Activated B cell treated with CpG ODN at 0.5 μM for 24 hours (primary cell): ENCODE measurements at regions of chr5 and their contacts with region 1.

Region 1: DNA sequence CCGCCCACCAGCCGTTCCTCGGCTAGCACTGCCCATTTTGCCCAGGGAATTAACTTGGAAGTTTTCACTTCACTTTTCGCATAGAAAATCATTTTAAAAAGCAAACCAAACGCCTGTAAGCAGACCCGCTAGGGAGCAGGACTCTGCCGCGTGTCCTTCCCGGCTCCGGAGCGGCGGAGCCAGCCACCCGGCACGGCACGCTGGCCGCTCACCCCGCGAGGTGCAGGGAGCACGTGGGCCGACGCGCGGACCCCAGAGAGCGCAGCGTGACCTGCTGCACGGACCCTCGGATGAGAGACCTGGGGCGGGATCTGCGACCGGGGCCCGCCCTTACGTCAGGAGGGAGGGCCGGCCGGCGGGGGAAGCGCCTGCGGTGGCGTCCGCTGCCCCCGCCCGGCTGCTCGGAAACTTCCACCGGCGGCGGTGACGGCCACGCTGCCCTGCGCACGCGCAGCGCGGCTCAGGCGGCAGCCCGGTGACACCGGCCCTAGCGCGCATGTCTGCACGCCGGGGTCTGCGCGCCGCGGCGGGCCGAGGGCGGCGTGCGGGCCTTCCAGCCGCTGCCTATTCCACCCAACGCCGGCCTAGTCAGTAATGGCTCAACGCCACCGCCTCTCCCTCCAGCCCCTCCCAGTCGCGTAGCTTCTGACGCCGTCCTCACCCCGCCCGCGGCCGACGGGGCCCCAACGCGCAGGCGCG is 506 bp upstream of the TENT4A start:
- DNase-seq: peak; percentile 98
- ATAC-seq: peak; percentile 79
- H3K4me3 Mint-ChIP-seq: peak overlapping the region; percentile 89
- H3K27ac Mint-ChIP-seq: peak overlapping the region; percentile 92
- H3K4me1 Mint-ChIP-seq: peaks cover 38% of the 10 kb centered on the region
- H3K27me3 Mint-ChIP-seq: no peaks in the 10 kb centered on the region
- CTCF ChIP-seq: no peak

Region 2: DNA sequence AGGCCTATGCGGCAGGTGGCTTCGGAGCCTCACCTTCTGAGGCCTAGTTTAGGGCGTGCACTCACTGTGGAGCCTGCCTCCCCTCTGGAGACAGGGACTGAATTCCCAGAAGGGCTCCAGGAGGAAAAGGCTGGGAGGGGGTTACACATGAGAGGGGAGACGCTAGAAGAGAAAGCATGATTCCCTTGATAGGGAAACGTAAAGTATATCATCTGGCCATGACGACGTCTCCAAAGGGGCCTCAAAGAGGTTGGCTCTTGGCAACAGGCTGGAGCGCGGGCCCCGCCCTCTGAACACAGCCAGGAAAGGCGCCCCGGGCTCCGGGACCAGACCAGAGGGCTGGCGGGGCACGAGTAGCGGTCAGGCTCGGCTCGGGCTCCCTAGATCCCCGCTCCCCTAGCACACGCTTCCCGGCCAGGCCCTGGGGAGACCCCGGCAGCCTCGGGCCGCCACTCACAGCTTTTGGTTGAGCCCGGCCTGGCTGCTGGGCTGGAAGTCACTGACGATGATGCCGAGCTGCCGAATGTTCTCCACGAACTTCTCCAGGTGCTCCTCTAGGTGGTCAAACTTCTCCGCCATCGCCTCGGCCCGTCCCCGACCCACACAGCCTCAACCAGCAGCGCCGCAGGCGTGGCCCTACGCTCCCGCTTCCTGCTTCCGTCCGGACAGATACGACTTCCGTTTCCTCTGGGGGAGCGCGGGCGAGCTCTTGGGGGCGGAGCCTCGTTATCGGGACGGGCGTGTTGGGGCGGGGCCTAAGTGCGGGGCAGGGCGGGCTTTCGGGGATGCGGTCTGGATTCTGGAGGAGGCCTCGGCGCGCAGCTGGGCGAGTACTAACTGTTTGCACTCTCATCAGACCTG is 334.6 kb before region 1 on chr5 and contains the start of gene MED10:
- CTCF ChIA-PET with region 1: no interaction called
- POLR2A ChIA-PET with region 1: interaction called, 3 read pairs
- intact Hi-C with region 1: loop called (anchors 1 kb)
- DNase-seq: peak; percentile 91
- ATAC-seq: peak; percentile 98
- H3K4me3 Mint-ChIP-seq: peak within 1 kb of the TSS; percentile 95
- H3K27ac Mint-ChIP-seq: peak within 1 kb of the TSS; percentile 89
- H3K4me1 Mint-ChIP-seq: peaks cover 38% of the 10 kb centered on the region
- H3K27me3 Mint-ChIP-seq: peaks cover 2% of the 10 kb centered on the region
- CTCF ChIP-seq: no peak
- total RNA-seq, gene MED10: 45.0 and 47.7 TPM in 2 replicates

Region 3: GRCh38 chr5:6728011-6728794 is 15.5 kb after region 1 on chr5:
- CTCF ChIA-PET with region 1: interaction called, 4 read pairs
- POLR2A ChIA-PET with region 1: interaction called, 11 read pairs
- intact Hi-C with region 1: loop called (anchors 1 kb)
- DNase-seq: peak; percentile 34
- ATAC-seq: peak; percentile 95
- H3K4me3 Mint-ChIP-seq: peak overlapping the region; percentile 74
- H3K27ac Mint-ChIP-seq: peak overlapping the region; percentile 90
- H3K4me1 Mint-ChIP-seq: peaks cover 84% of the 10 kb centered on the region
- H3K27me3 Mint-ChIP-seq: no peaks in the 10 kb centered on the region
- CTCF ChIP-seq: no peak

Region 4: GRCh38 chr5:6745706-6746222 is 33.0 kb after region 1 on chr5:
- CTCF ChIA-PET with region 1: interaction called, 7 read pairs
- POLR2A ChIA-PET with region 1: interaction called, 7 read pairs
- intact Hi-C with region 1: loop called (anchors 2 kb)
- DNase-seq: no peak
- ATAC-seq: peak; percentile 87
- H3K4me3 Mint-ChIP-seq: no peak overlapping the region
- H3K27ac Mint-ChIP-seq: peak overlapping the region; percentile 46
- H3K4me1 Mint-ChIP-seq: peaks cover 9% of the 10 kb centered on the region
- H3K27me3 Mint-ChIP-seq: no peaks in the 10 kb centered on the region
- CTCF ChIP-seq: peak; percentile 71

Region 5: DNA sequence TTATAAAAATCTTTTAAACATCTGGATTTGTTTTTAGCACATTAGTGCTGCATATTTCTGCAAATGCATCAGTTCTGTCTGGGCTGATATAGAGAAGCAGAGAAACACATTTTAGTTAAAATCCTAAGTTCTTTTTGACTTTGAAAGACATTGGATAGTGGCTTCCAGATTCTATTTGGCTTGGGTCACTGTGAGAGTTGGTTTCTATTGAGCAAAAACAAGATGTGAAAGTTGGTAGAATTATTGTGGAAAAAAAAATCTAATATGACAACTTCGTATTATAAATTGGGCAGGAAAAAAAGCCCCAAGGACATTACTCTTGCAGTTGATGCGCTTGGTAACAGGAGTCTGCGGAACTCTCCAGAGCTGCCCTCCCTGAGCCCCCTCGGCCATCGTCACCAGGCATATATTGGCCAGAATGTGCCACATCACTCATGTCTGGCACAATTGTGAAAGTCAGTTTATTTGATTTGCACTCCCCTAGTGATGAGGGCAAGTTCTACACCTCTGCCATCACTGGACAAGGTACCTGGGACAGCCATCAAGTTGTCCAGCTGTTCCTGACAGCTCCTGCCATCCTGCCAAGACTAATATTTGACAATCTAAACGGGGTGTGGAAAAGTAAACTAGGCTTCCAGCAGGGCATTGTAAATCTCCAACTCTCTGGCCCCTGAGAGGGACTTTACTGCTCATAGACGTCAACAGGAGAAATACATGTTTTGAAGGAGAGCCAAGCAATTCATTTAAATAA is 335.0 kb after region 1 on chr5:
- CTCF ChIA-PET with region 1: no interaction called
- POLR2A ChIA-PET with region 1: no interaction called
- intact Hi-C with region 1: no loop called
- DNase-seq: no peak
- ATAC-seq: no peak
- H3K4me3 Mint-ChIP-seq: no peak overlapping the region
- H3K27ac Mint-ChIP-seq: no peak overlapping the region
- H3K4me1 Mint-ChIP-seq: no peaks in the 10 kb centered on the region
- H3K27me3 Mint-ChIP-seq: no peaks in the 10 kb centered on the region
- CTCF ChIP-seq: no peak